ENCODE measurements at regions of chr2 and their contacts with region 1.

Region 1: GRCh38 chr2:41928526-41928925 is 119.3 kb upstream of the PKDCC start:
- DNase-seq: peak; percentile 81
- H3K4me3 ChIP-seq: no peak overlapping the region
- H3K27ac ChIP-seq: no peak overlapping the region
- H3K4me1 ChIP-seq: peaks cover 16% of the 10 kb centered on the region
- H3K27me3 ChIP-seq: no peaks in the 10 kb centered on the region
- CTCF ChIP-seq: no peak

Region 2: DNA sequence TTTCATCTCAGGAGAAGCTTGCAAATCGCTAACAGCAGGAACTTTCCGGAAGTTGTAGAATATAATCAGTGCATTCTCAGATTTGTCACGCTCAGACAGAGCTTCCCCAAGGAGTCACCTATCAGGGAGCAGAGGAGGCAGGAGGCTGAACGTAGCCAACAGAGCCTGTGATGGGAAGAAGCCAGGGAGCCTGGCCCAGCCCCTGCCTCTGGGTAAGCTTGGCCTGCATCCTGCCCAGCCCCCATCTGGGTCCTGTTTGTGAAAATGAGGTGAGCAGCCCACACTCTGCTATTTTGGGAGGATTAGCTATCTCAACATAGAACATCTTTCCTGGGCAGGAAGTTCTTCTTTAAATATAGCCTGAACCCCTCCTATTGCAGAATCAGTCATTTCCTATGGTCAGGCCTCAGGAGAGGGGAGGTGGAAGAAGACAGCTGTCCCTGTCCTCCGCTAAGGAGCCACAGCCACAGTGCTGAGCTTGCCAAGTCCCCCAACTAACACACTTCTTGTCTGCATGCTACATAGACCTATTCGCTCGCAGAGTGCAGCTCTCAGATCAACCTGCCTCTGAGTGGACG is 100.1 kb after region 1 on chr2:
- CTCF ChIA-PET with region 1: no interaction called
- dilution Hi-C with region 1: loop called (anchors 5 kb)
- in situ Hi-C with region 1: no loop called
- intact Hi-C with region 1: no loop called
- DNase-seq: no peak
- H3K4me3 ChIP-seq: no peak overlapping the region
- H3K27ac ChIP-seq: no peak overlapping the region
- H3K4me1 ChIP-seq: no peaks in the 10 kb centered on the region
- H3K27me3 ChIP-seq: peaks cover 1% of the 10 kb centered on the region
- CTCF ChIP-seq: no peak